ENCODE measurements at regions of chr5 and their contacts with region 1.

Region 1: DNA sequence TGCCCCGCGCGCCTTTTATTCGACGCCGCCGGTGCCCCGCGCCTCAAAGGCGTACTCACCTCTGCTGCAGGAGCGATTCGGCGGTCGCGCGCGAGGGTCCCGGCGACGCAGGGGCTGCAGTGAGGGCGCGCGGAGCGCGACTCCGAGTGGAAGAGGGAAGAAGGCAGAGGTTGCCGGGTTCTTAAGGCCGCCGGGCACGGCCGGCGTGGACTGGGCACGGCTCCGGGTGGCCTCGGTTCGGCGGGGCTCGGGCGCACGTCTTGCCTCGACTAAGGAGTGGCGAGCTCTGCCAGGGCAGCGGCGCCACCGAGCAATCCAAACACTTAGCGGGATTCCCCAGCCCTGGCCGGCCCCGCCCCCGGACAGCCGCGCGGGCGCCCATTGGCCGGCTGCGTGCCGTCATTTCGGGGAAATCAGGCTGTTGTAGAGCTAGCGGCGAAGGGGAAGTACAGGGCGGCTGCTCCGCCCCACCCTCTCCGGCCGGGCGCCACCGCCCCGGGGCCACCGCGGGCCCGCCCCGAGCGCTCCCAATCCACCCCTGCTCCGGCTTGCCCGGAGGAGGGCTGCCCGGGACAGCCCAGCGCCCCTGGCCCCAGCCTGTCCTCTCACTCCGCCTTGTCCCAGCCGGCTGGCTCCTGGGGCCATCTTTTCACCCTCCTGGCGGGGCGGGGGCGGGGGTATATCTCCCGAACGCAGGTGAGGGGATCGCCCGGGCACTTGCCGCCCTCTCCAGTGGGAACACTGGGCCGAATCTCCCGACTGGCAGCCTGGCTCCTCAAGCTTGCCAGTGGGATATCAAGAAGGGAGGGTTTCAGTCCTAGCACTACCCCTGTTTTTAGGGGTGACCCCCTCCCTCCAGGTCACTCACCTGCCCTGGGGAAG is at the start of gene IRF1:
- DNase-seq: peak; percentile 78 to 95
- H3K4me3 ChIP-seq: peak within 1 kb of the TSS; percentile 60 to 71 (median 67)
- H3K27ac ChIP-seq: peak within 1 kb of the TSS; percentile 67; the same call in 1 of the 2 replicates
- H3K4me1 ChIP-seq: peaks cover 10 to 17% (median 15%) of the 10 kb centered on the region in 4 experiments
- H3K27me3 ChIP-seq: peaks cover 0 to 7% (median 4%) of the 10 kb centered on the region in 4 experiments; a peak in 3 of 7 replicates
- CTCF ChIP-seq: no peak
- EP300 ChIP-seq: no peak
- POLR2A ChIP-seq: peak in 1 of 2 experiments; percentile 93; a peak in 2 of 3 replicates
- RAD21 ChIP-seq: no peak; a peak in 1 of 4 replicates
- total RNA-seq, gene IRF1: 8.5 TPM in 2 replicates

Region 2: GRCh38 chr5:132073231-132074013 is 417.3 kb before region 1 on chr5 and contains the start of gene CSF2:
- CTCF ChIA-PET with region 1: no interaction called
- POLR2A ChIA-PET with region 1: no interaction called
- DNase-seq: no peak
- H3K4me3 ChIP-seq: no peak within 1 kb of the TSS
- H3K27ac ChIP-seq: no peak within 1 kb of the TSS
- H3K4me1 ChIP-seq: peaks cover 0 to 2% (median 0%) of the 10 kb centered on the region in 4 experiments; a peak in 1 of 7 replicates
- H3K27me3 ChIP-seq: no peaks in the 10 kb centered on the region
- CTCF ChIP-seq: no peak
- EP300 ChIP-seq: no peak
- POLR2A ChIP-seq: no peak
- RAD21 ChIP-seq: no peak
- total RNA-seq, gene CSF2: not detected in 2 replicates

Region 3: DNA sequence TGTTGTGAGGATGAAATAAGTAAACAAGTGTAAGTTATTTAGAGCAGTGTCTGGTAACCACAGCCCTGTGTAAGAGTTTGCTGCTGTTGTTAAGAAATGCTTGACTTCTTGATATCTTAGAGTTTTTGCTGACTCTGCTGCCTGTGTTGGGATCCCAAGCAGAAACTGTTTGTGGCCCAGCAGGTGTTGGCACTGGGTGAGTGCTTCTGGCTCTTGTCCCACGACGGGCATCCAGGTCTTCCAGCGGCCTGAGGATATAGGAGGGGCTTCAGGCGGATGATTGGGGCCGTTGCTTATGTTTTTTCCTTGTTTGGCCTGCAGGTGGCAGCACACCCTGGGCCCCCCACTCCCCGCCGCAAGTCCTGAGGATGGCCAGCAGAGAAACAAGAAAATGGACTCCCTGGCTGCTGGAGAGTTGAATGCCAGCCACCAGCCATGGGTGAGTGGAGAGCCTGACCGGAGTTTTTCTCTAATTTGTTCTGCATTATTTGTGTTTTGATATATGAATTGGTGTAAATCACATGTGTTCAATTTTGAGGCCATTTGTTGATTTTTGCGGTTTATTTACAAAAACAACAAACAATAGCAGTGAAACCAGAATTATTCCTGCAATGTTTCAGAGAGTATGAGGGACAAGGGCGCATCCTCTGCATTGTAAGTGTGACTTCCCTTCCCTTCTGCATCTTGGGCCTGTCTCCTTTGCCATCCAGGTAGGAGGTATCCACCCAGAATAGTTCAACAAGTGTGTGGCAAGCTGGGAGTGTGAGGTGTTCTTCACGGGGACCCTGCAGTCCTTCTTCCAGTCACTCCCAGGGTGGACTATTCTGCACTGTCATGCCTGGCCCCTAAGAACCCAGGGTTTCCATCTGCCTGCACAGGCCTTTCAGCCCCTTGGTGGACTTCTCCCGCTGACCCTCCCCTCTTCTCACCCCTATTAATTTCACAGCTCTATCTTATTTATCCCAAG is 70.9 kb before region 1 on chr5:
- CTCF ChIA-PET with region 1: interaction called, 201 read pairs
- POLR2A ChIA-PET with region 1: interaction called, 49 read pairs
- DNase-seq: peak in 1 of 2 experiments; percentile 84
- H3K4me3 ChIP-seq: no peak overlapping the region
- H3K27ac ChIP-seq: no peak overlapping the region
- H3K4me1 ChIP-seq: peaks cover 0 to 2% (median 1%) of the 10 kb centered on the region in 4 experiments; a peak in 2 of 7 replicates
- H3K27me3 ChIP-seq: no peaks in the 10 kb centered on the region
- CTCF ChIP-seq: peak; percentile 64 to 92 (median 83)
- EP300 ChIP-seq: 0 out of 3 replicates have a peak, but pooled peaks of 1 of the 2 experiments have one; percentile 15
- POLR2A ChIP-seq: no peak
- RAD21 ChIP-seq: peak; percentile 78 to 86

Region 4: GRCh38 chr5:132437604-132438266 is 53.0 kb before region 1 on chr5:
- CTCF ChIA-PET with region 1: interaction called, 201 read pairs
- POLR2A ChIA-PET with region 1: interaction called, 11 read pairs
- DNase-seq: no peak
- H3K4me3 ChIP-seq: no peak overlapping the region
- H3K27ac ChIP-seq: no peak overlapping the region
- H3K4me1 ChIP-seq: peaks cover 0 to 7% (median 4%) of the 10 kb centered on the region in 4 experiments; a peak in 3 of 7 replicates
- H3K27me3 ChIP-seq: no peaks in the 10 kb centered on the region; a peak in 1 of 7 replicates
- CTCF ChIP-seq: no peak
- EP300 ChIP-seq: no peak
- POLR2A ChIP-seq: no peak
- RAD21 ChIP-seq: no peak

Region 5: GRCh38 chr5:132466433-132467286 is 24.1 kb before region 1 on chr5:
- CTCF ChIA-PET with region 1: interaction called, 11 read pairs
- POLR2A ChIA-PET with region 1: interaction called, 31 read pairs
- DNase-seq: no peak
- H3K4me3 ChIP-seq: no peak overlapping the region
- H3K27ac ChIP-seq: no peak overlapping the region
- H3K4me1 ChIP-seq: peaks cover 6 to 19% (median 11%) of the 10 kb centered on the region in 4 experiments
- H3K27me3 ChIP-seq: no peaks in the 10 kb centered on the region
- CTCF ChIP-seq: no peak
- EP300 ChIP-seq: peak in 1 of 2 experiments; percentile 7; a peak in 1 of 3 replicates
- POLR2A ChIP-seq: no peak
- RAD21 ChIP-seq: no peak

Region 6: DNA sequence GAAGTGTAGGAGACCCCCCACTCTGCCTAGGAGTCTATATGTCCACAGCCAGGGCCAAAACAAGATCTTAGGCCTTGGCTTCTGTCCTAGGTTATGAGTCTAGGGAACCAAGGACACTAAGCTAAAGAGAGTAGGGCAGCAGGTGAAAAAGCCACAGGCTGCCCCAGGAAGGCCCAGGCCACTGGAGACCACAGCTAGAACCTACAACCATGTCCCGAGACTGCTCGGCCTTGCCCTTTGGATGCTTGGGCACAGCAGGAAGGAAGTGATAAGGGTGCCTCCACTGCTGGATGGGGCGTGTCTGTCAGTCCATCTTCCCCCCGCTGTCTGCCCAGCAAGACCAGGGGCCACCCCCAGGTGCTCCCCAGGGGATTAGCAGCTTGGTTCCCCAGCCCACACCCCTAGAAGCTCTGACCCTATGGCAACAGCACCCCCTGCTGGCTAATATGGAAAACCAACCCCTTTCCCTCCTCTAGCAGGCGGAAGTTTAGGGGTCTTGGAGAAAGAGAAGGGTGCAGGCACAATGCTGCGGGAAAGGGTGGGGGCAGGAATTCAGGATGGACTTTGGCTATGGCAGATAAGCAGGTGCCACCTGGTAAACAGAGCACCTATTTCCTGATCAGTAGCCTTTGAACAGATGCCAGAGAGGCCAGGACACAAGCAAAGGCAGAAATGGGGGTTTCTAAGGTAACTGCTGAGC is 10.4 kb after region 1 on chr5:
- CTCF ChIA-PET with region 1: interaction called, 57 read pairs
- POLR2A ChIA-PET with region 1: interaction called, 13 read pairs
- DNase-seq: peak in 1 of 2 experiments; percentile 81
- H3K4me3 ChIP-seq: no peak overlapping the region
- H3K27ac ChIP-seq: no peak overlapping the region
- H3K4me1 ChIP-seq: peaks cover 0 to 7% (median 3%) of the 10 kb centered on the region in 4 experiments; a peak in 3 of 7 replicates
- H3K27me3 ChIP-seq: no peaks in the 10 kb centered on the region
- CTCF ChIP-seq: peak in 2 of 3 experiments; percentile 82 to 89; a peak in 3 of 4 replicates
- EP300 ChIP-seq: no peak
- POLR2A ChIP-seq: no peak
- RAD21 ChIP-seq: peak; percentile 92 to 94

Region 7: DNA sequence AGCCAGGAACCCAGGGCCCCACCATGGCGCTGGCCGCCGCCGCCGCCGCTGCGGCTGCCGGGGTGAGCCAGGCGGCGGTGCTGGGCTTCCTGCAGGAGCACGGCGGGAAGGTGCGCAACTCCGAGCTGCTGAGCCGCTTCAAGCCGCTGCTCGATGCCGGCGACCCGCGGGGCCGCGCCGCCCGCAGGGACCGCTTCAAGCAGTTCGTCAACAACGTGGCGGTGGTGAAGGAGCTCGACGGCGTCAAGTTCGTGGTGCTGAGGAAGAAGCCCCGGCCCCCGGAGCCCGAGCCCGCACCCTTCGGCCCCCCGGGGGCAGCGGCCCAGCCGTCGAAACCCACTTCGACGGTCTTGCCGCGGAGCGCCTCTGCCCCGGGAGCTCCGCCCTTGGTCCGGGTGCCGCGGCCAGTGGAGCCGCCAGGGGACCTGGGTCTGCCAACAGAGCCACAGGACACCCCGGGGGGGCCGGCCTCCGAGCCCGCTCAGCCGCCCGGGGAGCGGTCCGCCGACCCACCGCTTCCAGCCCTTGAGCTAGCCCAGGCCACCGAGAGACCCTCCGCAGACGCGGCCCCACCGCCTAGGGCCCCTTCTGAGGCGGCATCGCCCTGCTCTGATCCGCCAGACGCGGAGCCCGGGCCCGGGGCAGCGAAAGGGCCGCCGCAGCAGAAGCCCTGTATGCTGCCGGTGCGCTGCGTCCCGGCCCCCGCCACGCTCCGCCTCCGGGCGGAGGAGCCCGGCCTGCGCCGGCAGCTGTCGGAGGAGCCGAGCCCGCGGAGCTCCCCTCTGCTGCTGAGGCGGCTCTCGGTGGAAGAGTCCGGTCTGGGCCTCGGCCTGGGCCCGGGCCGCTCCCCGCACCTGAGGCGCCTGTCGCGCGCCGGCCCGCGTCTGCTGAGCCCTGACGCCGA is 323.1 kb after region 1 on chr5:
- CTCF ChIA-PET with region 1: no interaction called
- POLR2A ChIA-PET with region 1: no interaction called
- DNase-seq: peak in 1 of 2 experiments; percentile 80
- H3K4me3 ChIP-seq: peak overlapping the region; percentile 10 to 52 (median 28); a peak in 7 of 8 replicates
- H3K27ac ChIP-seq: no peak overlapping the region
- H3K4me1 ChIP-seq: peaks cover 0 to 3% (median 0%) of the 10 kb centered on the region in 4 experiments; a peak in 1 of 7 replicates
- H3K27me3 ChIP-seq: peaks cover 34 to 54% (median 46%) of the 10 kb centered on the region in 4 experiments
- CTCF ChIP-seq: no peak
- EP300 ChIP-seq: no peak
- POLR2A ChIP-seq: no peak
- RAD21 ChIP-seq: no peak

Measured in H1 (cell line).